ENCODE measurements at regions of chr3 and their contacts with region 1.

Region 1: GRCh38 chr3:131361464-131362421 is 19.8 kb upstream of the NUDT16 start:
- DNase-seq: peak; percentile 49
- ATAC-seq: peak; percentile 74
- H3K4me3 Mint-ChIP-seq: peak overlapping the region; percentile 81
- H3K27ac Mint-ChIP-seq: peak overlapping the region; percentile 15
- H3K4me1 Mint-ChIP-seq: peaks cover 14% of the 10 kb centered on the region
- H3K27me3 Mint-ChIP-seq: peaks cover 28% of the 10 kb centered on the region

Region 2: GRCh38 chr3:131381444-131382291 is 19.9 kb after region 1 on chr3 and contains the start of gene NUDT16:
- POLR2A ChIA-PET with region 1: interaction called, 11 read pairs
- DNase-seq: peak; percentile 97
- ATAC-seq: peak; percentile 99
- H3K4me3 Mint-ChIP-seq: peak within 1 kb of the TSS; percentile 93
- H3K27ac Mint-ChIP-seq: peak within 1 kb of the TSS; percentile 97
- H3K4me1 Mint-ChIP-seq: peaks cover 15% of the 10 kb centered on the region
- H3K27me3 Mint-ChIP-seq: no peaks in the 10 kb centered on the region
- total RNA-seq, gene NUDT16: 11.6 to 12.4 TPM